ENCODE measurements at regions of chr6 and their contacts with region 1.

Region 1: DNA sequence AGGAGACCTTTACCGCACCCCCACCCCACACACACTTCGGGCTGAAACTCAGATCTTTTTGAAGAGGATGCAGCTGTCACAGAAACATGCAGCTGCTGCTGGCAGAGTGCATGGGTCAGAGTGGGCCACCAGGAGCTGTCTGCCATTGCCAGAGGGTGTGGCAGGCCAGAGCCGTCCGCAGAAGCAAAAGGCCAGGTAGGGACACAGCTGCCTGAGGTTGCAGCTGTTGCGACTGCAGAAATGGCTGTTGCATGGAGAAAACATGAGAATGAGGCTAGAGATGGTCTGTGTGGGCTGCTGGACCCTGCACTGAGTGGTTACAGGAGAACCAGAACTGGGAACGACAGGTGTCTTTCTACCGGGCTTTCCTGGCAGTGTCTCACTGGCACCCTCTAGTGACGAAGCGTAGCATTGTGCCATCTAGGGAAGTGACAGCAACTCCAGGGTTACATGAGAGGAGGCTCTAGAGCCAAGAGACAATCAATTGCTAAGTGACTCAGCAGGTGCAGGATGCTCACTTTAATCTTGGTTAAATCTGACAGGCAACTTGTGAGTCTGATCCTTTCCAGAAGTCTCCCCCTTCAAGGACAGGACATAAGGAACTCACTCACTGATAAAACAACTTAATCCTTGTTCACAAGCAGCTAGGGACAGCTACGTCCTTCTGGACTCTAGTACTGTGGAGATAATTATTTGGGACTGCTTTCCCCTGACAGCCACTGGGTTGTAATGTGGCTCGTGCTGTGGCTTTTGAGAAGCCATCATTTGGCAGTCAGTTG is 29.1 kb upstream of the SERPINB9 start:
- DNase-seq: peak; percentile 89
- H3K4me3 ChIP-seq: peak overlapping the region in 2 of 8 donors; percentile 8 to 46
- H3K27ac ChIP-seq: peak overlapping the region in 2 of 8 donors; percentile 13 to 34
- H3K4me1 ChIP-seq: peaks cover 8 to 15% (median 9%) of the 10 kb centered on the region in 6 donors
- H3K27me3 ChIP-seq: no peaks in the 10 kb centered on the region
- CTCF ChIP-seq: peak; percentile 84 to 97 (median 95)
- POLR2A ChIP-seq: no peak

Region 2: DNA sequence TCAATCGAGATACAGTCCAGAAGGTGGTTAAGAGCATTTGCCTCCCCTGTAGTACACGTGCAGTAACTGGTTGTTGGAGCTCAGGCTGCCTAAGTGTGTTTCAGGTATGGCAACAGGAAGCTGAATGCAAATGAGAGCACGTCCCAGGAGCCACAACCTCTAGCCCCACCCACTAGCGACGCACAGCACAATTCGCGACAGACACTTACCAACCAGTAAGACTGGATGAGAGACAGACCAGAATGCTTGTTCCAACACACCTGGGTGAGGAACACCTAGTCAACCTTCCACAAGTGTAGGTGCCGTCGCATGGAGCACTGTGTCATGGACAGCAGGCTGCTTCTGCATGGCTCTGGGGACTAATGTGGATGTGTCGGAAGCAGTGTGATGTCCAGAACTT is 83.3 kb before region 1 on chr6:
- intact Hi-C with region 1: loop called (anchors 5 kb)
- DNase-seq: peak; percentile 86
- H3K4me3 ChIP-seq: no peak overlapping the region
- H3K27ac ChIP-seq: peak overlapping the region in 6 of 8 donors; percentile 6 to 78 (median 56)
- H3K4me1 ChIP-seq: peaks cover 9 to 83% (median 46%) of the 10 kb centered on the region in 6 donors
- H3K27me3 ChIP-seq: no peaks in the 10 kb centered on the region
- CTCF ChIP-seq: no peak
- POLR2A ChIP-seq: no peak

Region 3: GRCh38 chr6:2988426-2989331 is 56.5 kb after region 1 on chr6:
- intact Hi-C with region 1: loop called (anchors 10 kb)
- DNase-seq: peak; percentile 98
- H3K4me3 ChIP-seq: peak overlapping the region; percentile 64 to 100 (median 89)
- H3K27ac ChIP-seq: peak overlapping the region; percentile 91 to 99 (median 96)
- H3K4me1 ChIP-seq: peaks cover 7 to 38% (median 25%) of the 10 kb centered on the region in 6 donors
- H3K27me3 ChIP-seq: no peaks in the 10 kb centered on the region
- CTCF ChIP-seq: peak; percentile 78 to 92 (median 84)
- POLR2A ChIP-seq: peak in 2 of 3 donors; percentile 16 to 49

Region 4: GRCh38 chr6:3088446-3088845 is 156.3 kb after region 1 on chr6:
- intact Hi-C with region 1: no loop called
- DNase-seq: no peak
- H3K4me3 ChIP-seq: no peak overlapping the region
- H3K27ac ChIP-seq: peak overlapping the region in 5 of 8 donors; percentile 4 to 54 (median 41)
- H3K4me1 ChIP-seq: peaks cover 0 to 22% (median 2%) of the 10 kb centered on the region in 6 donors
- H3K27me3 ChIP-seq: no peaks in the 10 kb centered on the region
- CTCF ChIP-seq: no peak
- POLR2A ChIP-seq: no peak

Measured in spleen (tissue), 13 donors.